ENCODE measurements at regions of chr12 and their contacts with region 1.

Region 1: DNA sequence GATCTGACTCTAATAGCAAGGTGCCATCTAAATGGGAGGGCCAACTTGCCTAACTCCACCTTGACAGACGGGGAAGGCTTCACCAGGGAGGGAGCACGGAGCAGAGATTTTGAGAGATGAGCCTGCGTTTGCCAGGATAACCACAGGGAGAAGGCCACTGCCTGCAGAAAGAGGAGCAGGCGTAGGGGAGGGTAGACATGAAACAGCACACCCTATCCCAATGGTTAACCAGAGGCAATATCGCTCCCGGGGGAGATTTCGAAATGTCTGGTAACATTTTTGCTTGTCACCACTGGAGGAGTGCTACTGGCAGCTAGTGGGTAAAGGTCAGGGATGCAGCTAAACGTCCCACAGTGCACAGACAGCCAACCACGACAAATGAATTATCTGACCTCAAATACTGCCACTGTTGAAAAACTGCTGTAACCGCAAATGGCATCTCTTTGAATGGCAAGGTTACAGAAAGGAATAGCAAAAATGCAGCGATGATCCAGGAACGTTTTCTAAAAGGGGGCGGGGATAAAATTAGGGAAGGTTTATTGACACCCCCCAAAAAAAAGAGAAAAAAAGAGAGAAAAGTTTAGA is 126.0 kb upstream of the ATF7IP start:
- DNase-seq: no peak
- H3K4me3 Mint-ChIP-seq: peak overlapping the region; percentile 73
- H3K27ac Mint-ChIP-seq: peak overlapping the region; percentile 86
- H3K4me1 Mint-ChIP-seq: peaks cover 25% of the 10 kb centered on the region
- H3K27me3 Mint-ChIP-seq: no peaks in the 10 kb centered on the region

Region 2: DNA sequence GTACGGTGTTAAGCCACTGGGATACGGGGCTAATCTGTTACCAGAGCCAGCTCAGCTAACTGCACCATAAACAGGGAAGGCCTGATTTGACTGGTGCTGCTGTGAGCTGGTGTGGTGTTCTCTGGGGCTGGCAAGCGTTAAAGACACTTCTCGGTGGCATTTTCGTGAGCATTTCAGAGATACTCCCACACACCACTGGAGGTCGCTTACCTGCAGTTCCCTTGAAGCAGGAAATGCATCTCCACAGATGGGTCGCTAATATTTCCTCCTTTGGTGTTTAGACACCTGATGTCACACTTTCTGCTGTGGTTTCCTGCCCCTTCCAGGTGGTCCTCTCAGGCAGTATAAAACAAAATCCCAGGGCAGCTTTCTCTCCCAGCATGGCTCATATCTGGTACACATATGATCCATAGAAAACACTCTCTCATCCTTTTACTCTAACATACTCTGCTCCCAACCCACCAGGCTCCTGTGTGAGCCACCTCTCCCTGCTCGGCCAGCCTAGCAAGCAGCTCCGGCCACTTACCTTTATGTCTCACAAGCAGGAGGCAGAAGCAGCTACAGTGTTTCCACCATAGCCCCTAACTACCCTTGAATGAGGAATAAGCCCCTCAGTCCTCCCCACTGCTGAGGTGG is 128.1 kb before region 1 on chr12:
- intact Hi-C with region 1: no loop called
- DNase-seq: no peak
- H3K4me3 Mint-ChIP-seq: no peak overlapping the region
- H3K27ac Mint-ChIP-seq: no peak overlapping the region
- H3K4me1 Mint-ChIP-seq: no peaks in the 10 kb centered on the region
- H3K27me3 Mint-ChIP-seq: no peaks in the 10 kb centered on the region

Region 3: GRCh38 chr12:14216405-14217294 is 22.8 kb before region 1 on chr12:
- intact Hi-C with region 1: loop called (anchors 1 kb)
- DNase-seq: no peak
- H3K4me3 Mint-ChIP-seq: no peak overlapping the region
- H3K27ac Mint-ChIP-seq: peak overlapping the region; percentile 15
- H3K4me1 Mint-ChIP-seq: peaks cover 17% of the 10 kb centered on the region
- H3K27me3 Mint-ChIP-seq: peaks cover 4% of the 10 kb centered on the region

Region 4: GRCh38 chr12:14264778-14265177 is 25.3 kb after region 1 on chr12:
- intact Hi-C with region 1: no loop called
- DNase-seq: no peak
- H3K4me3 Mint-ChIP-seq: no peak overlapping the region
- H3K27ac Mint-ChIP-seq: no peak overlapping the region
- H3K4me1 Mint-ChIP-seq: peaks cover 14% of the 10 kb centered on the region
- H3K27me3 Mint-ChIP-seq: no peaks in the 10 kb centered on the region

Region 5: DNA sequence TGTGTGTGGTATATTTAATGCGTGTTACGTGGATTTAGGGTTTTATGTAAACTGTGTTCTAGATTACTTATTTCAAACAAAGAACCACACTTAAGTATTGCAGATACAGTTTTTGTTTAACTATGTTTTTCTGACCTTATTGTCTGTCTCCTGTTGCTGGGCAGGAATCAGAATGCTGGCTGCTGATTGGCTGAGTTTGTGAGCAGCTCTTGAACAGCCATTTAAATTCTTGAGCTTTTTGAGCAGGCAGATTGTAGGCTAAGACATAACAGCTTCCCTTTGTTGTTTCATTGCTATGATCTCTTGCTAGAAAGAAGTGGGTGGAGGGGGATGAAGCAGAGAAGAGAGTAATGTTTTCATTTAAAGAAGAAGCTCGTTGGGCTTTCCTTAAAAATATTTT is 178.3 kb after region 1 on chr12:
- intact Hi-C with region 1: loop called (anchors 1 kb)
- DNase-seq: peak; percentile 64
- H3K4me3 Mint-ChIP-seq: peak overlapping the region; percentile 77
- H3K27ac Mint-ChIP-seq: peak overlapping the region; percentile 92
- H3K4me1 Mint-ChIP-seq: peaks cover 42% of the 10 kb centered on the region
- H3K27me3 Mint-ChIP-seq: no peaks in the 10 kb centered on the region

Region 6: DNA sequence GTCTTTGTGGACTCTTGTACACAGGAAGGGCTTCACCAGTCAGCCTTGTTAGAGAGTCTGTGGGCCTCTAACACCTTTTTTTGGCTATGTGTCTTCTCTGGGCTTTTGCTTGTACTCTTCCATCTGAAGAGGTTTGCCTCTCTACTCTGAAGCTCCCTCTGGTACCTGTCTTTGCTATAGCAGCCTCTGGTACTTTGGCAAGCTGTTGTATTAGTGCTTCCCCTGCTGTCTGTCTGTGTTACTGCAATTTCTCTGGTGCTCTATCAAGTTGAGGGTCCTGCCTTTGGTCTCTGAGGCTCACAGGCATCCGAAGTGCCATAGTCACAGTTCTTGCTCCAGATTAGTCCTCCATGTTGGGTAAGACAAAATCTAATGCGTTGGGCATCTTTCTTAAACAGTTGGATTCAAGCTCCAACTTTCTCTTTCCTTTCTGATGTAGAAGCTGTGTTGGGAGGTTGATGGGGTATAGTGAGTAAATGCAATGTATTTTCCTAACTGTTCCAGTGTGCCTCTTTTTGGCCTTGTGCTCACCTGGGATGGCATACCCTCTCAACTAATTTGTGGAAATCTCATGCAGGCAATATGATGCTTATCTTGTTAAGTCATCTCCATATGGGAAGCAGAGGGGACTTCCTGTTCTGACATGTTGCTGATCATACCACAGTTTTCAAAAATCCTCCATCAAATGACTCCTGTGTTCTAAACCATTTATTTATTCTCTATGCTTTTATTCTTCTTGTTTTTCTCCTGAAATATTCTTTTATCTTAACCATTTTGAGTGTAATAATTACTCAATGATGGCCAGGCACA is 214.9 kb after region 1 on chr12:
- intact Hi-C with region 1: loop called (anchors 1 kb)
- DNase-seq: peak; percentile 28
- H3K4me3 Mint-ChIP-seq: no peak overlapping the region
- H3K27ac Mint-ChIP-seq: peak overlapping the region; percentile 83
- H3K4me1 Mint-ChIP-seq: peaks cover 49% of the 10 kb centered on the region
- H3K27me3 Mint-ChIP-seq: no peaks in the 10 kb centered on the region

Region 7: GRCh38 chr12:14618983-14619382 is 379.5 kb after region 1 on chr12:
- intact Hi-C with region 1: loop called (anchors 2 kb)
- DNase-seq: no peak
- H3K4me3 Mint-ChIP-seq: no peak overlapping the region
- H3K27ac Mint-ChIP-seq: no peak overlapping the region
- H3K4me1 Mint-ChIP-seq: peaks cover 11% of the 10 kb centered on the region
- H3K27me3 Mint-ChIP-seq: peaks cover 7% of the 10 kb centered on the region

Region 8: GRCh38 chr12:14629832-14630710 is 390.6 kb after region 1 on chr12:
- intact Hi-C with region 1: loop called (anchors 1 kb)
- DNase-seq: peak; percentile 42
- H3K4me3 Mint-ChIP-seq: no peak overlapping the region
- H3K27ac Mint-ChIP-seq: no peak overlapping the region
- H3K4me1 Mint-ChIP-seq: peaks cover 5% of the 10 kb centered on the region
- H3K27me3 Mint-ChIP-seq: peaks cover 16% of the 10 kb centered on the region

Region 9: DNA sequence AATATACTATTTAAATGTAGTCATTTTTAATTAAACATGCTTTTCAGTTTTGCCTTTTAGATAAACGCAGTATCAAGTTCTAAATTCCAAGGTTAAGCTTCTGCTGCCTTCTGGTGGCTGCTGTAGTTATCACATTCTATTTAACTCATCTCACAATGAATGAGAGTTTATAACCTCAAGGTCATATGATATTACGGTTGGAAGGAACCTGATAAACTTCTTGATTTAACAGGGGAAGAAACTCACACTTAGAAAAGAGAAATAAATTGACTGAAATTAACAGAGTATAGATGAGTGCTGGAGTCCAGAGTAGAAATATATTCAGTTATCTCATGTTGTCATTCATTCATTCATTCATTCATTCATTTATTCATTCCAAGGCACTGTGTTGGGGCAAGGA is 425.1 kb after region 1 on chr12:
- intact Hi-C with region 1: loop called (anchors 1 kb)
- DNase-seq: no peak
- H3K4me3 Mint-ChIP-seq: no peak overlapping the region
- H3K27ac Mint-ChIP-seq: no peak overlapping the region
- H3K4me1 Mint-ChIP-seq: peaks cover 11% of the 10 kb centered on the region
- H3K27me3 Mint-ChIP-seq: peaks cover 9% of the 10 kb centered on the region